Mammary epithelial cell (primary cell): ENCODE measurements at regions of chr18 and their contacts with region 1.

Region 1: GRCh38 chr18:22563098-22563707 is 145.5 kb upstream of the CTAGE1 start:
- DNase-seq: peak; percentile 85
- H3K4me3 ChIP-seq: peak overlapping the region; percentile 12 to 23 (median 19)
- H3K27ac ChIP-seq: peak overlapping the region; percentile 41
- H3K4me1 ChIP-seq: peaks cover 31% of the 10 kb centered on the region
- H3K27me3 ChIP-seq: no peaks in the 10 kb centered on the region
- CTCF ChIP-seq: peak; percentile 89

Region 2: DNA sequence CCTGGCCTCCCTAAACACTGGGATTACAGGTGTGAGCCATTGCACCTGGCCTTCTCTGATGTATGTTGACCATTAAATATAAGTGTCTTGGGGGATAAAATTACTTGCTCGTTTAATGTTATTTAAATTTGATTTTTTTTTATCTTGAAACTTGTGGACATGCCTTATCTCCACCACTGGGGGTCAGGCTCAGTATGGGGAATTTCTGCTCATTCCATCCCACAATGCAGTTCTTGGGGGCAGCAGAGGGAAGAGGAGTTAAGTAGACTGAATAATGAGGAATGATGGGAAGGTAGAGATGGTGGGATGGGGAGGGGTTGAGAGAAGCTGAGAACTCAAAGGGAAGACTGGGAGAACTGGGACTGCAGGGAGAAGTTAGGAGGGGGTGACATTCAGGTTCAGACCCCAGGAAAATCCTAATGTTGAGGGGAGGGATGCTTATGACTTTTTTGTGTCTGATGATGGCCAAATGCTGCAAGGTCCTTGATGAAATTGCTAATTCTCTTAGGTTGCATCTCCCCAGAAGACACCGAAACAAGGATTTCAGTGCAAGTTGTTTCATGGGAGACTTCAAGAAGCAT is 648.4 kb before region 1 on chr18:
- CTCF ChIA-PET with region 1: no interaction called
- dilution Hi-C with region 1: no loop called
- in situ Hi-C with region 1: loop called in 1 of 2 experiments (anchors 10 kb)
- intact Hi-C with region 1: loop called (anchors 1 kb)
- DNase-seq: peak; percentile 25
- H3K4me3 ChIP-seq: no peak overlapping the region
- H3K27ac ChIP-seq: no peak overlapping the region
- H3K4me1 ChIP-seq: no peaks in the 10 kb centered on the region
- H3K27me3 ChIP-seq: peaks cover 7% of the 10 kb centered on the region
- CTCF ChIP-seq: peak; percentile 46 to 66

Region 3: DNA sequence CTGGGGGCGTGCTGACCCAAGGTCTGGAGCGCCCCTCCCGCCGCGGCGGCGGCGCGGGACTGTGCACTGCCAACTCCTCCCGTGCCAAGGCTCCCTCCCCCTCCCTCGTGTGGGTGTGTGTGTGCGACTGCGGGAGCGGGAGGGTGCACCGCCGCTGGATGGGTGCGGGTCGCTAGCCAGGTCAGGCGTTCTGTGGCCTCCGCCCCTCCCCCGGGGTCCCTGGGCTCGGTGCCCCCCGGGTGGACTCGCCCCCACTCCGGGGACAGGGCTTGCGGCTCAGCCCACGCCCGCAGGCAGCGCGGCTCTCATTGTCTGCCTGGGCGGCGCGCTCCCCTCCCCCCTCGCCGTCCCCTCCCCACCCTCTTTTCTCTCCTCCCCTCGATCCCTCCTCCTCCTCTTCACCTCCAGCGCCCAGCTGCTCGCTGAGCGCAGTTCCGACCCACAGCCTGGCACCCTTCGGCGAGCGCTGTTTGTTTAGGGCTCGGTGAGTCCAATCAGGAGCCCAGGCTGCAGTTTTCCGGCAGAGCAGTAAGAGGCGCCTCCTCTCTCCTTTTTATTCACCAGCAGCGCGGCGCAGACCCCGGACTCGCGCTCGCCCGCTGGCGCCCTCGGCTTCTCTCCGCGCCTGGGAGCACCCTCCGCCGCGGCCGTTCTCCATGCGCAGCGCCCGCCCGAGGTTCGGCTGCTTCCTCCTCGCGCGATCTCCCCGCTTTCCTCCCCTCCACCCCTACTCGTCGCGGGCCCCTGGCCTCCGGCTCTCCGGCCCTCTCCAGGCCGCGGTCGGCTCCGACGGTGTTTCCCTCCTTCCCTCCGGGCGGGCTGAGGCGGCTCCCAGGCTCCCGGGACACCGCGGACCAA is 394.0 kb before region 1 on chr18 and contains the start of gene GATA6:
- CTCF ChIA-PET with region 1: interaction called, 7 read pairs
- dilution Hi-C with region 1: no loop called
- in situ Hi-C with region 1: loop called (anchors 10 kb)
- intact Hi-C with region 1: loop called (anchors 1 kb)
- DNase-seq: peak; percentile 85
- H3K4me3 ChIP-seq: peak within 1 kb of the TSS; percentile 67 to 93 (median 83)
- H3K27ac ChIP-seq: peak within 1 kb of the TSS; percentile 63
- H3K4me1 ChIP-seq: peaks cover 18% of the 10 kb centered on the region
- H3K27me3 ChIP-seq: peaks cover 41% of the 10 kb centered on the region
- CTCF ChIP-seq: peak; percentile 34 to 69
- total RNA-seq, gene GATA6: 1.0 to 3.6 TPM

Region 4: GRCh38 chr18:22324191-22325131 is 238.7 kb before region 1 on chr18:
- CTCF ChIA-PET with region 1: no interaction called
- dilution Hi-C with region 1: no loop called
- in situ Hi-C with region 1: no loop called
- intact Hi-C with region 1: loop called (anchors 2 kb)
- DNase-seq: no peak
- H3K4me3 ChIP-seq: peak overlapping the region in 2 of 3 experiments; percentile 15 to 32
- H3K27ac ChIP-seq: no peak overlapping the region
- H3K4me1 ChIP-seq: peaks cover 5% of the 10 kb centered on the region
- H3K27me3 ChIP-seq: no peaks in the 10 kb centered on the region
- CTCF ChIP-seq: peak; percentile 19 to 50

Region 5: DNA sequence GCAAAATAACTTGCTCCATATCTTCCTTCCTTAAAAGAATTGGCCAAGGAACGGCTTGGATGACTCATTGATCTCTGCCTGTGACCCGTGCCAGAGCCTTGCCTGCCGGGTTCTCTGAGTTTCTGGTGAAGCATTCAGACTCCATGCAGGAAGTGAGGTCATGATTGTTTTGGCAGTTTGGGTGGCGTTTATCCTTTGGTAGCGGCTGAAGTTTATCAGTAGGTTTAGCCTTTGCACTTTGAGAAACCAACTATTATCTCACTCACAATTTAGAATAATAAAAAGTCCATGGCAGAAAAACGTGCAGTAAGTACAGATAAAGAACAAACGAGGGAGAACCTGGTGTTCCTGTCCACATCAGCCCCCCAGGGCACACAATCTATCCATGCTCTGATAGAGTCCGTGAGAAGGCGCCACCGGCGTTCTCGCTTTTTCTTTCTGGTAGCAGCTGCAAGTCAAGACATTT is 130.5 kb before region 1 on chr18:
- CTCF ChIA-PET with region 1: no interaction called
- dilution Hi-C with region 1: loop called (anchors 10 kb)
- in situ Hi-C with region 1: no loop called
- intact Hi-C with region 1: loop called (anchors 10 kb)
- DNase-seq: peak; percentile 89
- H3K4me3 ChIP-seq: no peak overlapping the region
- H3K27ac ChIP-seq: peak overlapping the region; percentile 46
- H3K4me1 ChIP-seq: peaks cover 25% of the 10 kb centered on the region
- H3K27me3 ChIP-seq: no peaks in the 10 kb centered on the region
- CTCF ChIP-seq: no peak

Region 6: GRCh38 chr18:22703883-22704585 is 140.8 kb after region 1 on chr18:
- CTCF ChIA-PET with region 1: no interaction called
- dilution Hi-C with region 1: no loop called
- in situ Hi-C with region 1: no loop called
- intact Hi-C with region 1: loop called (anchors 10 kb)
- DNase-seq: peak; percentile 43
- H3K4me3 ChIP-seq: no peak overlapping the region
- H3K27ac ChIP-seq: no peak overlapping the region
- H3K4me1 ChIP-seq: peaks cover 3% of the 10 kb centered on the region
- H3K27me3 ChIP-seq: no peaks in the 10 kb centered on the region
- CTCF ChIP-seq: peak; percentile 74 to 78

Region 7: GRCh38 chr18:22789600-22789999 is 226.4 kb after region 1 on chr18:
- CTCF ChIA-PET with region 1: no interaction called
- dilution Hi-C with region 1: no loop called
- in situ Hi-C with region 1: no loop called
- intact Hi-C with region 1: no loop called
- DNase-seq: no peak
- H3K4me3 ChIP-seq: no peak overlapping the region
- H3K27ac ChIP-seq: no peak overlapping the region
- H3K4me1 ChIP-seq: no peaks in the 10 kb centered on the region
- H3K27me3 ChIP-seq: no peaks in the 10 kb centered on the region
- CTCF ChIP-seq: no peak